Aorta (tissue), 5 donors: ENCODE measurements at regions of chr1 and their contacts with region 1.

Region 1: DNA sequence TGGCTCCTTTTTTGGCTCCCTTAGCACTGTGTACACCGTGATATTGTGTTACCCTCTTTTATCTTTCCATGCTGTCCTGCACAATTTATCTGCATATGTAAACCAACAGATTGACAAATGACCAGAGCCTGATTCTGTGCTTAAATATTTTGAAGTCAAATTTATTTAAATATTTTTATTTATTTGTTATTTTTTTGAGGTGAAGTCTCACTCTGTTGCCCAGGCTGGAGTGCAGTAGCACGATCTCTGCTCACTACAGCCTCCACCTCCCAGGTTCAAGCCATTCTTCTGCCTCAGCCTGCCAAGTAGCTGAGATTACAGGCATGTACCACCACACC is 12.8 kb downstream of the PMF1 start:
- DNase-seq: peak in 1 of 2 donors; percentile 21
- ATAC-seq: no peak
- H3K4me3 ChIP-seq: no peak overlapping the region
- H3K27ac ChIP-seq: no peak overlapping the region
- H3K4me1 ChIP-seq: no peaks in the 10 kb centered on the region
- H3K27me3 ChIP-seq: no peaks in the 10 kb centered on the region

Region 2: DNA sequence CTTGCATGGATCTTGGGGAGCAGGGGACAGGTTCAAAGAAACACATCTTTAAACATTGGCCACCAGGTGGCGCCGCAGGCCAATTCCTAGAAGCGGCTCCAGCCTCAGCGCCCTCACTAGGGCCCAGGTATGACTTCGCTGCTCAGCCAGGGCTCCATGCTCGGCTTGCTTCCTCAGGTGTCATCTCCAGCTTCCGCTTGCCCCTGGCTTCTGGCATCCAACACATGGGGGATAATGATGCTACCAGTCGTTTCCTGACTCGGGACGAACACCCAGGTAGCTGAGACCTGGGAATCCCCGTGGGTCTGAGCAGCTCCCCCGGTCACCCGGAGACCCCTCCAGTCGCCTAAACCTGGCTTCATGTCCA is 134.8 kb before region 1 on chr1:
- intact Hi-C with region 1: loop called (anchors 1 kb)
- DNase-seq: peak; percentile 88 to 97
- ATAC-seq: peak; percentile 82
- H3K4me3 ChIP-seq: no peak overlapping the region
- H3K27ac ChIP-seq: no peak overlapping the region
- H3K4me1 ChIP-seq: no peaks in the 10 kb centered on the region
- H3K27me3 ChIP-seq: no peaks in the 10 kb centered on the region

Region 3: DNA sequence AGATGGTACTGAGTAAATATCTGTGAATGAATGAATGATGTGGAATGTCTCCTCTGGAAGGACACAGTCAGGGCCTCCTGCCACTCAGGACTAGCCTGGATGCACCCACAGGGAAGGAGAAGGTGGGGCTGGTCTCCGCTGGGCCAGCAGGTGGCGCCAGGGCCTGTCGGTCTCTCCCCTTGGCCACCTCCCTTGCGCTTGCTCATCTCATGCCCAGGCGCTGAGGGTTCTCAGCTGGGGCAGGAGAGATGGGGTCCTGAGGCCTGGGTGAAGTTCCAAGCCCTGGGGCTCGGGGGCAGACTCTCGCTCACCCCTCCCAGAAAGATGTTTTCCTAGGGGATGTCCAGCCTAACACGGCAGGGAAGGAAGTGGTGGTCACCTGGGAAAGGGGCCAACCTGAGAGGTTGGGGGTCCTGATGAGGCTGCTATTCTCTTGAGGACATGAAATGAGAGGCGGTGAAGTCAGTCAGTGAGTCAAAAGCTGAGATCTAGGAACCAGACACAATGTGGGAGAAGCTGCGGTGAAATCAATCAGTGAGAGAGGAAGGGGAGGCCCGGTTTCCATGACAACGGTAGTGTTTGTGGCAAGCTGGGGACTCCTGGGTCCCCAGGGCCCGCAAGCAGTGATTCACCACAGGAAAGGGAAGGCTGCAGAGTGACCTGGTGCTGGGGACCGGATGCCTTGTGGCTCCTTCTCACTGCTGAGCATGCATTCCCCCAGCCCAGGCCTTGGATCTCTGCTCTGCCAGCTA is 128.8 kb before region 1 on chr1:
- intact Hi-C with region 1: loop called in 1 of 2 experiments (anchors 2 kb)
- DNase-seq: peak; percentile 94 to 97
- ATAC-seq: peak; percentile 96
- H3K4me3 ChIP-seq: no peak overlapping the region
- H3K27ac ChIP-seq: peak overlapping the region; percentile 5 to 72
- H3K4me1 ChIP-seq: no peaks in the 10 kb centered on the region
- H3K27me3 ChIP-seq: no peaks in the 10 kb centered on the region

Region 4: DNA sequence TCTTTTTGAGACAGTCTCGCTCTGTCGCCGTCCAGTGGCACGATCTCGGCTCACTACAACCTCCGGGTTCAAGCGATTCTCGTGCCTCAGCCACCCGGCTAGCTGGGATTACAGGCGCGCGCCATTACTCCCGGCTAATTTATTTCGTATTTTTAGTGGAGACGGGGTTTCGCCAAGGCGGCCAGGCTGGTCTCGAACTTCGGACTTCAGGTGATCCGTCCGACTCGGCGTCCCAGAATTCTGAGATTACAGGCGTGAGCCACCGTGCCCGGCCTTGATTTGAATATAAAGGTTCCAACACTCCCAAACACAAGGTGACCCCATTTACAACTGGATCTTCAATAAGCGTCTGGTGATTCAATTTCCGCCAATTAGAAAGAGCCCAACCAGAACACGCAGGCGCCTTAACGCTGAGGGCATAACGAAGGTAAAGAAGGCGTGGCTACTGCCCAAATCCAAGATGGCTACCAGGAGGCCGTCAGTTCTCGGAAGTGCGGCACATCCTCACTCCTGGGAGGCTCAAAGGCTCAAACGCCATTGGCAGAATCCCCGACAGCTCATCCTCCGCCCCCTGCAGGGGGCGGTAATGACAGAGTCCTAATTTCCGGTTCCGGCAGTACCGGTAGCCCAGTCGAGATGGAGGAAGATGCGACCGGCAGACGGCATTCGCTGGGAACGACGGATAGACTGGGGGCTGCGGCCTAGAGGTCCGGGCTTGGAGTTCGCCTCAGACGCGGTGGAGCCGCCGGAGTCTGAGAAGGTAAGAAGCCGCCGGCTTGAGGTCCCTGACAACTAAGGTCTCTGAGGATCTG is 32.0 kb before region 1 on chr1 and contains the start of gene SLC25A44:
- intact Hi-C with region 1: no loop called
- DNase-seq: peak; percentile 97
- ATAC-seq: peak; percentile 100
- H3K4me3 ChIP-seq: peak within 1 kb of the TSS; percentile 70 to 84
- H3K27ac ChIP-seq: peak within 1 kb of the TSS; percentile 1 to 65
- H3K4me1 ChIP-seq: no peaks in the 10 kb centered on the region
- H3K27me3 ChIP-seq: no peaks in the 10 kb centered on the region
- total RNA-seq, gene SLC25A44: 15.7 to 18.6 TPM

Region 5: DNA sequence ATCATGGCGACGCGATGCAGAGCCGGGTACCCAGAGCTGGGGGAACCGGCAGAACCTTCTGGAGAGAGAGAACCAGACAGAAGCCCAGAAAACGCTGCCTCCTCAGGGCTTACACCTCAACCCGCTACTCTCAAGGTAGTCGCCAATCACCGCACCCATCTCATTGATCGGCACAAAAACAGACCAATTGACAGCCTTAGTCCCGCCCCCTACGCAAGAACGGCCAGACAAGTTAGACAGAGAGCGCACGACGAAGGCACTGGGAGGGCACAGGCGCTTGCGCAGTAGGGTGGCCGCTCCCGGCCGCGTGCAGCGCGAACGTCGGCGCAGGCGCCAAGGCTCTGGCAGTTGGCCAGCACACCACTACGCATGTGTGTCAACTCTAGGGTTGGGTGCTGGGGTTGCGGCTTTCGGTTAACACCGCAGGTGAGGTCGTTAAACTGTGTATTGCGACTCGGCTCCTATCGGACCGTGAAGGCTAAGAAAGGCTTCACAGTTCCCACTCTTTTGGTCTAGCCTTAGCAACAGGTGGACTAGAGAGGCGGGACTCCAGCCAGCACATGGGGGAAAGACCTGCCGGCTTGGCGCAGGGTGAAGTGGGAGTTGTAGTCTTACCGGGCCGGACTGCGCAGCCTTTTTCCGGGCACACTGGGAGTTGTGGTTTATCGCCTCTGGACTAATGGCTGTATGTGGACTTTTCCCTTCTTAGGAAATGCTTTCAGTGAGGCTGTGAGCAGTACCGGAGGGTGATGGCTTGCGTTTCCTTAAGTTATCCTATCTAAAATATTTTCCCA is 112.7 kb after region 1 on chr1 and contains the starts of genes CCT3 and TSACC:
- intact Hi-C with region 1: no loop called
- DNase-seq: peak; percentile 99 to 100
- ATAC-seq: peak; percentile 99
- H3K4me3 ChIP-seq: peak within 1 kb of the TSS; percentile 42 to 81
- H3K27ac ChIP-seq: peak within 1 kb of the TSS in 1 of 2 donors; percentile 30
- H3K4me1 ChIP-seq: peaks cover 0 to 9% of the 10 kb centered on the region in 2 donors
- H3K27me3 ChIP-seq: no peaks in the 10 kb centered on the region
- total RNA-seq, gene CCT3: 102 to 112 TPM
- total RNA-seq, gene TSACC: not detected